IMR-90 (cell line): ENCODE measurements at regions of chr9 and their contacts with region 1.

Region 1: DNA sequence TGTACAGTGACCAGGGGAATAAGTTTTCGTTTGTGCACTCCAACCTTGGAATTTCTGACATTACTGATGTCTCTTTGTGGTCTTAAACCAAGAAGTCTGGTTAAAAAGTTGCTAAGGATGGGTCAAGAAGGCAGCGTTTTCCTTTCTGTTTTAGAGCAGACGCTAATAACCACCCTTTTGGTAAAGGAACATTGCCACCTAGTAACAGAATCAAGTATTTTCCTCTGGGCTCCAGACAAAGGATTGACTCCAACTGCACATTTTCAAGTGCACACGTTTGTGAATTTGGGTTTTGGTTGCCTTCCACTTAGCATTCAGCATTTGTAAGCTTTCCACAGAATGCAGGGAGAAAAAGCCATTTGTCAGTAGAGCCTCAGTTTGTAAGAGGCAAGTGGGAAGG is 22.2 kb upstream of the CEP78 start:
- DNase-seq: no peak
- ATAC-seq: peak; percentile 59; the same call in 1 of the 2 replicates
- H3K4me3 ChIP-seq: no peak overlapping the region
- H3K27ac ChIP-seq: no peak overlapping the region
- H3K4me1 ChIP-seq: no peaks in the 10 kb centered on the region
- H3K27me3 ChIP-seq: peaks cover 3% of the 10 kb centered on the region; the same call in 1 of the 2 replicates
- CTCF ChIP-seq: no peak
- POLR2A ChIP-seq: no peak
- RAD21 ChIP-seq: no peak

Region 2: DNA sequence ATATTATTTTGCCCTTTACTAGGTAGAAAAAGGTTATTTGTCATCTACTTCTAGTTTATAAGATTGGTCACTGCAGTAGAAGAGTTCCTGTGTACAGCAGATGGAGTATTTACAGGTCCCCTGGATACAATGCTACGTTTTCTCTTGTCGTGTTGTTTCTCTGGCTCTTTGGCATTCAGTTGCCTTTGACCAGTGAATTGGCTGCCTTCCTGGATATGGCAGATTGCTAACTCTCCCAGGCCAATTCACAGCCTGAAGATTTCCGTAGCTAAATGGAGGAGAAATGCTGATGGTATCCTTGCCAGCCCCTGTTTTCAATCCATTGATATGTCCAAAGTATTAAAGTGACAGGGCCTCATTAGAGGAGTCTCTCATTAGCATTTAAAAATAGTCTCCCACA is 149.6 kb before region 1 on chr9:
- CTCF ChIA-PET with region 1: no interaction called
- POLR2A ChIA-PET with region 1: no interaction called
- dilution Hi-C with region 1: no loop called
- in situ Hi-C with region 1: no loop called
- intact Hi-C with region 1: loop called (anchors 10 kb)
- DNase-seq: no peak
- ATAC-seq: no peak
- H3K4me3 ChIP-seq: no peak overlapping the region
- H3K27ac ChIP-seq: no peak overlapping the region
- H3K4me1 ChIP-seq: no peaks in the 10 kb centered on the region
- H3K27me3 ChIP-seq: no peaks in the 10 kb centered on the region
- CTCF ChIP-seq: no peak
- POLR2A ChIP-seq: no peak
- RAD21 ChIP-seq: no peak

Region 3: GRCh38 chr9:78196258-78196657 is 17.5 kb before region 1 on chr9:
- CTCF ChIA-PET with region 1: no interaction called
- POLR2A ChIA-PET with region 1: no interaction called
- dilution Hi-C with region 1: no loop called
- in situ Hi-C with region 1: no loop called
- intact Hi-C with region 1: no loop called
- DNase-seq: no peak
- ATAC-seq: no peak
- H3K4me3 ChIP-seq: no peak overlapping the region
- H3K27ac ChIP-seq: no peak overlapping the region
- H3K4me1 ChIP-seq: no peaks in the 10 kb centered on the region
- H3K27me3 ChIP-seq: no peaks in the 10 kb centered on the region
- CTCF ChIP-seq: no peak
- POLR2A ChIP-seq: no peak
- RAD21 ChIP-seq: no peak